AG04450 (cell line): ENCODE measurements at regions of chr9 and their contacts with region 1.

Region 1: DNA sequence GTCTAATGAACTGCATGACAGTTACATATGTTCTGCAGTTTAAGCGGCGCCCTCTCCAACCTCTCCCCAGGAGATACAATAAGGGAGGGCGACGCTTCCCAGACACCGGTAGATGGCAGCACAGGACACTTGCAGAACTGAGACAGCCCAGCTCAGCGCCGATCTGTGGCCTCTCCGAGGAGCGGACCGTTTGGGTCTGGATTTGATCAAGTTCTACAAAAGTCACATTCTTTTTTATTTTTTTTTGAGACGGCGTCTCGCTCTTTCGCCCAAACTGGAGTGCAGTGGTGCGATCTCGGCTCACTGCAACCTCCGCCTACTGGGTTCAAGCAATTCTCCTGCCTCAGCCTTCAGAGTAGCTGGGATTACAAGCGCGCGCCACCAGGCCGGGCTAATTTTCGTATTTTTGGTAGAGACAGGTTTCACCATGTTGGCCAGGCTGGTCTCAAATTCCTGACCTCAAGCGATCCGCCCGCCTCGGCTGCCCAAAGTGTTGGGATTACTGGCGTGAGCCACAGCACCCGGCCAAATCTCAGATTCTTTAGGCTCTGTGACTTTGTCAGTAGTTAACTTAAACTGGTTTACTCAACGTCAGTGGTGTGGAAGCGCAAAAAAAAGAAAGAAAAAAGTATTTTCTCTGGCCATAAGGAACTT is 1.4 kb upstream of the ATOSB start:
- DNase-seq: peak; percentile 84
- H3K4me3 ChIP-seq: peak overlapping the region; percentile 98
- H3K27ac ChIP-seq: no peak overlapping the region
- H3K27me3 ChIP-seq: no peaks in the 10 kb centered on the region
- CTCF ChIP-seq: peak; percentile 95

Region 2: GRCh38 chr9:34929506-34930102 is 187.4 kb before region 1 on chr9:
- CTCF ChIA-PET with region 1: no interaction called
- POLR2A ChIA-PET with region 1: no interaction called
- DNase-seq: no peak
- H3K4me3 ChIP-seq: no peak overlapping the region
- H3K27ac ChIP-seq: no peak overlapping the region
- H3K27me3 ChIP-seq: peaks cover 7% of the 10 kb centered on the region
- CTCF ChIP-seq: peak; percentile 61

Region 3: GRCh38 chr9:35071814-35072460 is 45.1 kb before region 1 on chr9:
- CTCF ChIA-PET with region 1: interaction called, 3 read pairs
- POLR2A ChIA-PET with region 1: interaction called, 18 read pairs
- DNase-seq: peak; percentile 58
- H3K4me3 ChIP-seq: peak overlapping the region; percentile 90
- H3K27ac ChIP-seq: peak overlapping the region; percentile 100
- H3K27me3 ChIP-seq: no peaks in the 10 kb centered on the region
- CTCF ChIP-seq: peak; percentile 34; the same call in 1 of the 2 replicates

Region 4: GRCh38 chr9:35161713-35162604 is 44.9 kb after region 1 on chr9 and contains the start of gene UNC13B:
- CTCF ChIA-PET with region 1: interaction called, 15 read pairs
- POLR2A ChIA-PET with region 1: interaction called, 5 read pairs
- DNase-seq: peak; percentile 74
- H3K4me3 ChIP-seq: peak within 1 kb of the TSS; percentile 88
- H3K27ac ChIP-seq: peak within 1 kb of the TSS; percentile 80
- H3K27me3 ChIP-seq: no peaks in the 10 kb centered on the region
- CTCF ChIP-seq: 0 out of 2 replicates have a peak, but pooled peaks have one; percentile 26
- polyA plus RNA-seq, gene UNC13B: 12.5 and 15.4 TPM in 2 replicates

Region 5: DNA sequence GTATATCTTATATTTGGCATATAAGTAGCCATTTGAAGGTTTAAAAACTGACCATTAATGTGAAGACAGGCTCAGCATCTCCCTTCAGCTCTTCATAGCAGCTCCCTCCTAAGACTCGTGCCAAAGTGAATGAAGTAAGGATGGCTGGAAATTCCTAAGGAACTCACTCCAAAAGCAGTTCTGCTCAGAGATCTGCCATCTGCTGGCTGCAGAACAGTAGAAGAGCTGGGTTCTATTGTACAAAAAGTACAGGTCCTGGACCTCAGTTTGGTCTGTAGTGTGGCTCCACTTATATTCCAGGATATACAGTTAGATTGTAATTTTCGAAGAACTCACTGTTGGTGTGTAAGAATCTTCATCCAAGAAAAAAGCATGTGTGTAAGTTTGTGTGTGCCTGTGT is 268.0 kb after region 1 on chr9:
- CTCF ChIA-PET with region 1: interaction called, 18 read pairs
- POLR2A ChIA-PET with region 1: interaction called, 3 read pairs
- DNase-seq: peak; percentile 37
- H3K4me3 ChIP-seq: no peak overlapping the region
- H3K27ac ChIP-seq: no peak overlapping the region
- H3K27me3 ChIP-seq: no peaks in the 10 kb centered on the region
- CTCF ChIP-seq: peak; percentile 69

Region 6: GRCh38 chr9:35481347-35481975 is 364.4 kb after region 1 on chr9:
- CTCF ChIA-PET with region 1: interaction called, 39 read pairs
- POLR2A ChIA-PET with region 1: no interaction called
- DNase-seq: peak; percentile 52
- H3K4me3 ChIP-seq: no peak overlapping the region
- H3K27ac ChIP-seq: no peak overlapping the region
- H3K27me3 ChIP-seq: peaks cover 3% of the 10 kb centered on the region
- CTCF ChIP-seq: peak; percentile 80

Region 7: DNA sequence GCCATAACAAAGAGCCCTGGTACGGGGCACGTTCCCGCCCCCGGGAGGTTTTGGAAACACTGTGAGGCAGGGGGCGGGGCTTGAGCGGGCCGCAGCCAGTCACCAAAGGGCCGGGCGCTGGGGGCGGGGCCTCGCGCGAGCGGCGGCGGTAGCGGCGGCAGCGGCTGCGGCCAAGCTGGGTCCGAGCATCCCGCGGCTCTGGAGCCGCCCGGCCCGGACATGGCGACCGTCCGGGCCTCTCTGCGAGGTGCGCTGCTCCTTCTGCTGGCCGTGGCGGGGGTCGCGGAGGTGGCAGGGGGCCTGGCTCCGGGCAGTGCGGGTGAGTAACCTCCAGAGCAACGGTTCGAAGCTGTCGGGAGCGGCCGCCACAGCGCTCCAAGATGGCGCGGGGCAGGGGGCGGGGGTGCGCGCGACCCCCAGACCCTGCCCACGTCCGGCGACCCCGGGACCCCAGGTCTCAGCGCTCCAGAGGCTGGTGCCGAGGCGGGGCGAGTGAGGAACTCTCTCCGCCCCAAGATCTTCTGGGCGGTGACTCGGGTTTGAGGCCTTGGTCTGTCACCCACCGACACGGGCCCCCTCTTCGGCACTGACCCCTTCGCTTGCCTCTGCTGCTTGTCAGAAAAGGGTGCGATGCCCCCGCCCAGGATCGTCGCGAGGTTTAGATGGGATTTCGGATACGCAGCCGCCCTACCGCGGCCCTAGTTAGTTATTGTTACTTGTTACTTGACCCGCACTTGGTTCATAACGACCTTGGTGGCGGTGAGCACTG is 919.9 kb after region 1 on chr9 and contains the start of gene RECK:
- CTCF ChIA-PET with region 1: no interaction called
- POLR2A ChIA-PET with region 1: interaction called, 12 read pairs
- DNase-seq: peak; percentile 68
- H3K4me3 ChIP-seq: peak within 1 kb of the TSS; percentile 89
- H3K27ac ChIP-seq: peak within 1 kb of the TSS; percentile 85
- H3K27me3 ChIP-seq: no peaks in the 10 kb centered on the region
- CTCF ChIP-seq: no peak
- polyA plus RNA-seq, gene RECK: 103 and 112 TPM in 2 replicates